ENCODE measurements at regions of chr9 and their contacts with region 1.

Region 1: DNA sequence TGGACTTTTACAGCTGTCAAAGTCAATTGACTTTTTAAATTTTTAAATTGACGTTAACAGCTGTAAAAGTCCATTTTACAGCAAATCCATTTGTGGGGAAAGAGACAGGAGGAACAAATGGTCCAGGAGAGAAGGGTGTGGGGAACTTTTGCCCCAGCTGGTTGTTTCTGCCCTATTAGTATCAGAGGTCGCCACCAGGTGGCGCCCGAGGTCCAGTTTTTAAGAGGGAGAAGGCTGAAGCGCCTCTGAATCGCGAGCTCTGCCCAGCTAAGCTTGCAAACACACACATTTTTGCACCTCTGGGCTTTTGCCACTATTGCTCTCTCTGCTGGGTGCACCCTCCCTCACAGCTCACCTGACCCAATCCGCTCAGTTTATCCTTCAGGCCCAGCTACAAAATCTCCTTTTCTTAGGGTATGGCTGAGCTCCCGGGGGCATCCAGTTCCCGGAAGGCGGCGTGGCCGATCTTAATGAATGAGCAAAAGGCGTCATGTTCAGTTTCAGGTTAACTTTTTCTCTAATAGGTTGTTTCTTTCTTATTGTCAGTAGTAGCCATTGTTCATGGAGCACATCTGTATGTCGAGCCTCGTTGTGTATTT is 6.3 kb upstream of the TTLL11 start:
- DNase-seq: no peak
- H3K4me3 ChIP-seq: no peak overlapping the region
- CTCF ChIP-seq: peak; percentile 73

Region 2: GRCh38 chr9:122087406-122088200 is 11.8 kb before region 1 on chr9:
- CTCF ChIA-PET with region 1: interaction called, 33 read pairs
- POLR2A ChIA-PET with region 1: no interaction called
- DNase-seq: no peak
- H3K4me3 ChIP-seq: no peak overlapping the region
- CTCF ChIP-seq: no peak

Region 3: DNA sequence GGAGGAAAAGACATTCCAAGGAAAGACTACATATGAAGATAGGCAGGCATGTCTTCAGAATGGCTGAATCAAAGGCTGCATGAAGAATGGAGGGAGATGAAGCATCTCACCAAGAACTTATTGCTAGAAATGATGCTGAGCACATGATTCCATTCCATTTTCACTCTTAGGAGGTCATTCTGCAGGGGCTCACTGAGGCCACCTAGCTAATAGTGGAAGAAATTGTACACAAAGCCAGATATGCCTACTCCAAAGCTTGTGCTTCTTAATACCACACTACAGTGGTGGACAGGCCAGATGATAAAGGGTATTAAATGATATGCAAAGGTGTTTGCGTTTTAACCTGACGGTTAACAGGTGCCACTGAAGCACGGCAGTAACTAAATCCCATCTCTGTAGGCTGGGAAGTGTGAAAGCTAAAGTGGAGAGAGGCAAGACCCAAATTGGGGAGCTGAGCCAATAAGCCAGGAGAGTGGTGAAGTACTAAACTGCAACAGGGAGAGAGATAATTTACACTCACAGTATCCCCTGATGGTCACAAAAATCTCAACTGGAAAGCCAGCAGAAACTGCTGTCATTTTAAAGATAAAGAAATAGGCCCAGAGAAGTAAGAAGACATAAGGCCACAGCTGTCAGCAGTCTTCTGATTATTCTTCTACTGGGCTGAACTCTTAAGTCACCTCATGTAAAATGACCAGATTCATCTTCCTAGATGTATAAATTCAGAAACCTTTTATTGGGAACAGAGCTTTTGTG is 45.6 kb after region 1 on chr9:
- CTCF ChIA-PET with region 1: interaction called, 19 read pairs
- POLR2A ChIA-PET with region 1: no interaction called
- DNase-seq: no peak
- H3K4me3 ChIP-seq: no peak overlapping the region
- CTCF ChIP-seq: peak; percentile 37

Region 4: DNA sequence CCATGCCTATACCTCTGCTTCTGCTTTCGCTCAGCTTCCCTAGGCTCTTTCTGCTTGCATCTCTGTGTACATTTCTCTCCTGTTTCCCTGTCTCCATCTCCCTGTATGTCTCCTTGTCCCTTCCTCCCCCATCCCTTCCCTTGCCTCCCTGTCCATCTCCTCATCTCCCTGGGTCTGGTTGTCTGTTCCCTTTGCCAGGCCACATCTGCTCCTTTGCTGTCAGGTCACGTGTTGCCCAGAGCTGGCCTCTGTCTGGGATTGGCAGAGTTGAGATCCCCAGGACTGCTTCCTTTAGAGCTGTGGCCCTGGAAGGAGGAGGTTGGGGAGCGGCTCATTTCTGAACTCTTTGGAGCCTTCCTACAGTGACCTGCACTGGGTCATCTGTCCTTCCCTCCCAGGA is 239.6 kb after region 1 on chr9:
- CTCF ChIA-PET with region 1: interaction called, 185 read pairs
- POLR2A ChIA-PET with region 1: no interaction called
- DNase-seq: no peak
- H3K4me3 ChIP-seq: no peak overlapping the region
- CTCF ChIP-seq: no peak

Region 5: GRCh38 chr9:122356627-122357026 is 257.3 kb after region 1 on chr9:
- CTCF ChIA-PET with region 1: interaction called, 185 read pairs
- POLR2A ChIA-PET with region 1: no interaction called
- DNase-seq: no peak
- H3K4me3 ChIP-seq: no peak overlapping the region
- CTCF ChIP-seq: peak; percentile 34

Region 6: GRCh38 chr9:122453677-122454135 is 354.3 kb after region 1 on chr9:
- CTCF ChIA-PET with region 1: interaction called, 15 read pairs
- POLR2A ChIA-PET with region 1: no interaction called
- DNase-seq: no peak
- H3K4me3 ChIP-seq: no peak overlapping the region
- CTCF ChIP-seq: no peak

Region 7: GRCh38 chr9:122810306-122810946 is 711.1 kb after region 1 on chr9:
- CTCF ChIA-PET with region 1: interaction called, 26 read pairs
- POLR2A ChIA-PET with region 1: no interaction called
- DNase-seq: no peak
- H3K4me3 ChIP-seq: no peak overlapping the region
- CTCF ChIP-seq: peak; percentile 65